ENCODE measurements at regions of chr16 and their contacts with region 1.

Region 1: DNA sequence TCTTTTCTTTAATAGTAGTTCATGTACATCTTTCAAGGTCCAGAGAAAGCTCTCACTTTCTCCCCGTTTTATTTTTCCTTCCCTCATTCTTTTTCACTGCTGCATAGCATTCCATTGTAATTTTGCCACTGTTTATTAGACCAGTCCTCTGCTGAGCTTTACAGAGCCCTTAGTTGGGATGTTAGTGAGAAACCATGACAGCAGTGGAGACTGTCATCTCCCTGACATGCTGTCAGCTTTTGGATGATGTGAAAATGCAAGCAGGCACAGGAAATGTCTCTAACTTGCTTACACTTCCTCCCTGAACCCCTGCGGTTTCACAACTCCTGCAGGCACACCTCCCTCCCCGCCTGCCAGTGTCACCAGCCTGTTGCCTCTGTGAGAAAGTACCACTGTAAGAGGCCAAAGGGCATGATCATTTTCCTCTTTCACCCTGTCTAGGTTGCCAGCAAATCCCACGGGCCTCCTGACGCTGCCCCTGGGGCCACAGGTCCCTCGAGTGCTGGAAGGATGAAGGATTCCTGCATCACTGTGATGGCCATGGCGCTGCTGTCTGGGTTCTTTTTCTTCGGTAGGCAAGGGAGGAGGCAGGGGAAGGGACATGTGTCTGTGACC is at the start of gene ITGAL:
- H3K4me3 Mint-ChIP-seq: peak within 1 kb of the TSS; percentile 67
- H3K27ac Mint-ChIP-seq: peak within 1 kb of the TSS; percentile 84
- H3K4me1 Mint-ChIP-seq: peaks cover 66% of the 10 kb centered on the region
- H3K27me3 Mint-ChIP-seq: no peaks in the 10 kb centered on the region

Region 2: GRCh38 chr16:30458561-30459394 is 13.7 kb before region 1 on chr16:
- intact Hi-C with region 1: loop called (anchors 2 kb)
- H3K4me3 Mint-ChIP-seq: peak overlapping the region; percentile 30
- H3K27ac Mint-ChIP-seq: peak overlapping the region; percentile 92
- H3K4me1 Mint-ChIP-seq: peaks cover 52% of the 10 kb centered on the region
- H3K27me3 Mint-ChIP-seq: no peaks in the 10 kb centered on the region